ENCODE measurements at regions of chr3 and their contacts with region 1.

Region 1: DNA sequence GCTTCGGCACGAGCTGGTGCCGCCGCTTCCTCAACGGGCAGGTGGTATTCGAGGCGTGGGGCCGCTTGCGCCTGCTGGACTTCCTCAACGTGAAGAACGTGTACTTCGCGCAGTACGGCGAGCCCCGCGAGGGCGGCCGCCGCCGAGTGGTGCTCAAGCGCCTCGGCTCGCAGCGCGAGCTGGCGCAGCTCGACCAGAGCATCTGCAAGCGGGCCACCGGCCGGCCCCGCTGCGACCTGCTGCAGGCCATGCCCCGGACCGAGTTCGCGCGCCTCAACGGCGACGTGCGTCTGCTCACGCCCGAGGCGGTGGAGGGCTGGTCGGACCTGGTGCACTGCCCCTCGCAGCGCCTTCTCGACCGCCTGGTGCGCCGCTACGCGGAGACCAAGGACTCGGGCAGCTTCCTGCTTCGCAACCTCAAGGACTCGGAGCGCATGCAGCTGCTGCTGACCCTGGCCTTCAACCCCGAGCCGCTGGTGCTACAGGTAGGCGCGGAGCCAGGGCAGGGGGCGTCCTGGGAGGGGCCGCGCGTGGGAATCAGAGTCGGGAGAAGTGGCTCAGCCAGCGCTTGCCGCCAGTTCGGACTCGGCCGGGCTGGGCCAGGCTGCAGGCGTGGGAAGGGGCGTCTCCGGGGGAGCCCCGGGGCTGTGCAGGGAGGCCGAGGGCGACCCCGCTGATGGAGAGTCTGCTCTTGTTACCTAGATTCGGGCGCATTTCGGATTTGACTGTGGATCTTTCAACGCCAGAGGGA is 1.1 kb downstream of the DIPK2A start:
- DNase-seq: peak in 9 of 10 donors; percentile 60 to 83 (median 73)
- H3K4me3 ChIP-seq: peak overlapping the region; percentile 77 to 100 (median 95)
- H3K27ac ChIP-seq: peak overlapping the region; percentile 94 to 100 (median 99)
- H3K27me3 ChIP-seq: no peaks in the 10 kb centered on the region
- CTCF ChIP-seq: peak in 51 of 56 donors; percentile 15 to 75 (median 60)

Region 2: DNA sequence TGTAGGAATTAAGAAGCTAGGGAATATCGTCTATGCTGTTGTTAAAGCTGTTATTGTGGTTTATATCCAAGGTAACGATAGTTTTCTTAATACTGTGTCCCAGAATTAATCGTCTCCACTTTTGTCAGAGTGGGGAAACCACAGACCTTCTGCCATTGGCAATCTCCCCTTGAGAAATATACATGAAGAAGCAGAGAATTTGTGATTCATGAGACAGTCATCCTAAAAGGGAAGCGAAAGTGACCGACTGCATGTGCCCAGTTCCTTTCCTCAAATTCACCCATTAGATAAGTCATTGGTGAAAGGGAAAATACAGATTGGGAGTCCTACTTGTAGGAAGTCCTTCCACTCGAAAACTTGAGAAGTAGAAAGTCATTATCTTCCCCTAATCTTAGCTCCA is 25.6 kb after region 1 on chr3:
- intact Hi-C with region 1: no loop called
- DNase-seq: no peak
- H3K4me3 ChIP-seq: no peak overlapping the region
- H3K27ac ChIP-seq: no peak overlapping the region
- H3K27me3 ChIP-seq: no peaks in the 10 kb centered on the region
- CTCF ChIP-seq: no peak

Region 3: DNA sequence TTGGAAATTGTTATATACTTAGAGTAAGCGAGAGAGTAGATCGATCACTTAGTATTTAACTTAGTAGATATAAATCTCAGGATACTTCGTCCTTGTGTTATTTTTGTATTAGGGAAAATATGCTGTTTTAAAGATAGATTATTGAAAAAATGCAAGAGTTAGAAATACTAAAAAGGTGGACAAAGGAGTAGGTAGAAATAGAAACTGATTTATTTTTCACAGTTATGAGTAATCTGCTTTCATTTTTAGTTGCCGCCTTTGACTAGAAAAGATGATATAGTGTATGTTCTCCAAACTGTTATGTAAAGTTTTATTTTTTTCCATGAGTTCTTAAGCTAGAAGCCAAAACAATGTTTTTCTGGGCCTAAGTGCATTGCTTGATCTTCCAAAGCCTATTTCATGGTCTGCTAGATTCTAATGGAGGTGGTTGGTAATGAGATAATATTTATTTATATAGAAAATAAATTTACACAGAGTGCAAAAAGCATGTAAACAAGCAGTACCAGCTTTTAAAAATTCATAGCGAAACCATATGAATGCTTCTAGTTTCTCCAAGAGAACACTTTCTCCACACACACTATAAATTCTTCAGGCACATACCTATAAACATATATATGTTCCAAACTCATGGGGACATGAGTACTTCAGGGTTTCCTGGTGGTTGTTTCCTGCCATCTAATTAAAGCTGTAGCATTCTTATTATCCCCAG is 60.0 kb after region 1 on chr3:
- intact Hi-C with region 1: loop called (anchors 2 kb)
- DNase-seq: no peak
- H3K4me3 ChIP-seq: peak overlapping the region in 23 of 59 donors; percentile 0 to 49 (median 18)
- H3K27ac ChIP-seq: peak overlapping the region; percentile 63 to 99 (median 95)
- H3K27me3 ChIP-seq: no peaks in the 10 kb centered on the region
- CTCF ChIP-seq: no peak

Region 4: DNA sequence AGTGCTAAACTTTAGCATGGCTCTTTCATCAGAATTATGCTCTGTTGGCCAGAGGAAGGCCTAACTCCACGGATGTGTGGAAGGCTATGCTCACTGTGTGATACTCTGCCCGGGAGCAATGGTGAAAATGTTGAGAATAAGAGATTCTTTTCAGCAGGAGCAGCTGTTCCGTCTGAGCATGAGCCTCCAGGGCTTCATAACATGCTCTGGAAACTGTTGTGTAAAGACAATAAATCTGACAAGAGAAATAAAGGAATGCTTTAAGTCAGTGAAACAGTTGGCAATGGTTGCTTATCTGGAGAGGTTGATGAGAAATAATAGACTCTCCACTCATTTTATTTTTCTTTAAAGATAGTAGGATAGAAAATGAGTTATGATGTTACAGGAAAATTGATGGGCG is 268.7 kb after region 1 on chr3:
- intact Hi-C with region 1: loop called in 1 of 2 experiments (anchors 10 kb)
- DNase-seq: no peak
- H3K4me3 ChIP-seq: no peak overlapping the region
- H3K27ac ChIP-seq: peak overlapping the region in 4 of 59 donors; percentile 15 to 63 (median 32)
- H3K27me3 ChIP-seq: no peaks in the 10 kb centered on the region
- CTCF ChIP-seq: no peak

Region 5: GRCh38 chr3:144660186-144660585 is 687.5 kb after region 1 on chr3:
- intact Hi-C with region 1: loop called in 1 of 2 experiments (anchors 10 kb)
- DNase-seq: no peak
- H3K4me3 ChIP-seq: no peak overlapping the region
- H3K27ac ChIP-seq: peak overlapping the region in 6 of 59 donors; percentile 1 to 55 (median 18)
- H3K27me3 ChIP-seq: no peaks in the 10 kb centered on the region
- CTCF ChIP-seq: no peak